Adrenal gland (tissue), 19 donors: ENCODE measurements at regions of chrX and their contacts with region 1.

Region 1: GRCh38 chrX:119067023-119067739 is 5.6 kb upstream of the CT47C1 start:
- DNase-seq: peak; percentile 66 to 89 (median 82)
- H3K4me3 ChIP-seq: no peak overlapping the region
- H3K27ac ChIP-seq: no peak overlapping the region
- H3K4me1 ChIP-seq: no peaks in the 10 kb centered on the region
- H3K27me3 ChIP-seq: peaks cover 13% of the 10 kb centered on the region
- CTCF ChIP-seq: peak; percentile 50 to 85 (median 71)
- POLR2A ChIP-seq: no peak

Region 2: DNA sequence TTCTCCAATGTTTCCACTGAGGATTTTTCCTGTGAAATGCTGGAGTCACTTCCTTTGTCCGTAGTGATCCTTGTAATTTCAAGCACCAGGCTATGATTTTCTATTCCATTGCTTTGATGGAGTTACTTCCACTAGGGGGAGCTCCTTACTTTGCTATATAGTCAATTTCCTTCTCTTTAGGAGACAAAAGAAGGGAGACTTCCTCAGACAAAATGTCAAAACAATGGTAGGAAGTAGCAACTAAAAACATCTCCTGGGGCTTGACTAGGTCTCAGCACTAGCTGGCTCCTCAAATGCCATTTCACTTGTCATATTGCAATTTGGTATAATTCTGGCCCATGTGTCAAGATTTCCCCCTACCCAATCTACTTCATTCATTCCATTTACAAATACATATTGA is 219.5 kb before region 1 on chrX:
- intact Hi-C with region 1: loop called (anchors 5 kb)
- DNase-seq: no peak
- H3K4me3 ChIP-seq: no peak overlapping the region
- H3K27ac ChIP-seq: no peak overlapping the region
- H3K4me1 ChIP-seq: no peaks in the 10 kb centered on the region
- H3K27me3 ChIP-seq: no peaks in the 10 kb centered on the region
- CTCF ChIP-seq: peak; percentile 51 to 73 (median 68)
- POLR2A ChIP-seq: no peak

Region 3: GRCh38 chrX:118884552-118885138 is 182.5 kb before region 1 on chrX:
- intact Hi-C with region 1: no loop called
- DNase-seq: no peak
- H3K4me3 ChIP-seq: no peak overlapping the region
- H3K27ac ChIP-seq: no peak overlapping the region
- H3K4me1 ChIP-seq: no peaks in the 10 kb centered on the region
- H3K27me3 ChIP-seq: peaks cover 4% of the 10 kb centered on the region
- CTCF ChIP-seq: no peak
- POLR2A ChIP-seq: no peak

Region 4: DNA sequence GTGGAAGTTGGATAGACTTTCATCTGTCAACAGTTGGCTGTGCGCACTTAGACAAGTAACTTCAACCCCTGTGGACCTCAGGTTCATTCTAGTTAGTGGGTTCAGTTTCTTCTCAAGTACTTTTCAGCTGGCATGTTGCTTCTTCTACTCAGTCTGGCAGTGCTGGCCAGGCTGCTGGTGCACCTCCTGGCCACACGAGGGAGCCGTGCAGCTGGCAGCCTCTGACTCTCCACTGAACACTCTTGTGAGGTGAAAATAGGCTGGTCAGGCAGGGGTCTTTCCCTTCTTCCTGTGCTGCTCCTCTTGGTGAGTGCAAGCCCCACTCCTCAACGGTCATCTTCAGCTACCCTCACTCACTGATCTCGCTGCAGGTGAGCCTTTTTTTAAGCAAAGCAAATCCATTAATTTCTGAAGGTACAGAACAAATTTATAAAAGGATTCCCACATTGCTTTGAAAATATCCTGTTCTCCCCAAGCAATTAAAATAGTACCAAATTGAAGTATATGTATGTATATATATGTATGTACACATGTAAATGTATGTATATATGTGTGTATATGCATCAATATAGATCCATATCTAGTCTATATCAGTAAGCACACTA is 62.2 kb before region 1 on chrX:
- intact Hi-C with region 1: loop called in 1 of 2 experiments (anchors 5 kb)
- DNase-seq: peak; percentile 30 to 73 (median 54)
- H3K4me3 ChIP-seq: no peak overlapping the region
- H3K27ac ChIP-seq: no peak overlapping the region
- H3K4me1 ChIP-seq: peaks cover 0 to 4% of the 10 kb centered on the region in 2 donors
- H3K27me3 ChIP-seq: peaks cover 3% of the 10 kb centered on the region
- CTCF ChIP-seq: peak; percentile 56 to 94 (median 78)
- POLR2A ChIP-seq: no peak

Region 5: DNA sequence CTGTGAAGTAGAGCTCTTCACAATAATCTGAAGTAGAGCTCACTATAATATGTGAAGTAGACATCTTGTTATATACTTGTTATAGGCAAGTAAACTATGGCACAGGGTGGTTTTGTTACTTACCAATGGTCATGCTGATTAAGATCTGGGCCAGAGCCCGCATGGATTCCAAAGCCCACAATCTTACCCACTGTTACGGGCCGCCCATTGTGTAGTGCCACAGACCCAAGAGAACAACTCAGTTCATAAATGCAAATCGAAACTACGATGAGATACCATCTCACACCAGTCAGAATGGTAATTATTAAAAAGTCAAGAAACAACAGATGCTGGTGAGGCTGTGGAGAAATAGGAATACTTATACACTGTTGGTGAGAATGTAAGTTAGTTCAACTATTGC is 41.3 kb before region 1 on chrX:
- intact Hi-C with region 1: no loop called
- DNase-seq: no peak
- H3K4me3 ChIP-seq: no peak overlapping the region
- H3K27ac ChIP-seq: no peak overlapping the region
- H3K4me1 ChIP-seq: no peaks in the 10 kb centered on the region
- H3K27me3 ChIP-seq: no peaks in the 10 kb centered on the region
- CTCF ChIP-seq: no peak
- POLR2A ChIP-seq: no peak